Mammary epithelial cell (primary cell): ENCODE measurements at regions of chr6 and their contacts with region 1.

Region 1: DNA sequence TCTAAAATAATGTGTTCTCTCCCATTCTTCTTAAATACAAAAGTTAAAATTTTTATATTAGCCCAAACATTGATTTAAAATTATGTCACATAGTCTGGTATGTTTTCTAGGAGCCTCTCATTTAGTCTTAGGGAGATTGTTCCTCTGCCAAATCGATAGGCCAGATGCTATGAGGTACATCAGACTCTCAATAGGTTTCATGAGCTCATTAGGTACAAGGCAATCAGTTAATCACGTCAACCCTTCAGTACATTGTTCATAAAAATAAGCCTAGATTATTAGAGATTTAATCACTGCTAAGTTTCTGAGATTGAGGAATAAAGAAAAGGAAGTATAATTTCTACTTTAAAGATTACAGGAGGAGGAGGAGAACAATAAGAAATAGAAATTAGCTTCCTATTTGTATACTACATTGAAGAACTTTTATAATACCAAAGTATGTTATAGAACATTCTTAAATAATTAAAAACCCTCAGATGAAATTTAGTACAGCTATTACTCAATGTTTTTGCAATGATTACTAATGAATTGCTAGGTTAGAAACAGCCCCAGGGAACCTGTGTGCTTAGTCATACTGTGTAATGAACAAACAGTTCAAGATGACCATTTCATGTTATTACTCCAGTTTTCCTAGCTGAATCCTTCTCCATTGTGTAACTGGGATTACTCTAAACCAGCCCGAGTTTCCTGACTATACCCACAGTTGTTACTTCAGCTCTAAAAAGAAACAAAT is 117.1 kb downstream of the BMP5 start:
- DNase-seq: peak; percentile 93
- H3K4me3 ChIP-seq: peak overlapping the region in 1 of 3 experiments; percentile 25
- H3K27ac ChIP-seq: peak overlapping the region; percentile 98
- H3K4me1 ChIP-seq: peaks cover 9% of the 10 kb centered on the region
- H3K27me3 ChIP-seq: no peaks in the 10 kb centered on the region
- CTCF ChIP-seq: no peak

Region 2: DNA sequence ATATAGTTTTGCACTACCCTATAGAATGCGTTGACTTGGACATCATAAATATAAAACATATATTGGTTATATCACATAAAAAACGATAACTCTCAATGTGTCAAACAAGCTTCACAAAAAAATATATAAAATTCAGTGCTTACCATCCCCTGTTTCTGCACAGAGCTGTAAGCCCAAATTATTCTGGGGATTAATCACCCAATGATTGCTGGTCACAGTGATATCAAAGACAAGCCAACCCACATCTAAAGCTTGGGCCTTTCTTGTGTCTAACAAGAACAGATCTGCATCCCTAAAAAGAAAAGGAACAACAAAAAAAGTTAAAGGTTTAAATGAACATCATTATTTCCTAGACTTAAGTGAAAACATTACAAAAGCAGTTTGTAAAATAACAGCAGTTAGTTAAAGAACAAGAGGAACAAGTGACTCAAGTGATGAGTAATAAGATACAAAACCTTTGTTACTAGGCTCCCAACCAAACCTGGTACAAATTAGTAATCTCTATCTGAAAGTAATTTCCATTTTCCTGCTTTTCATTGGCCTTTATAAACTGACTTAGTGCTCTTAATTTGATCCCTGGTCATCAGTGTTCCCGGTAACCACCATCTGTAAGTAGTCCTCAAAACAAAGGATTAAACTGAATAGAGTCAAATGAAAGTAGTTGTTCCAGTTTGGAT is 36.0 kb after region 1 on chr6:
- CTCF ChIA-PET with region 1: no interaction called
- dilution Hi-C with region 1: no loop called
- in situ Hi-C with region 1: no loop called
- intact Hi-C with region 1: loop called (anchors 2 kb)
- DNase-seq: peak; percentile 83
- H3K4me3 ChIP-seq: no peak overlapping the region
- H3K27ac ChIP-seq: peak overlapping the region; percentile 95
- H3K4me1 ChIP-seq: peaks cover 5% of the 10 kb centered on the region
- H3K27me3 ChIP-seq: no peaks in the 10 kb centered on the region
- CTCF ChIP-seq: no peak

Region 3: GRCh38 chr6:55825402-55826051 is 67.2 kb after region 1 on chr6:
- CTCF ChIA-PET with region 1: no interaction called
- dilution Hi-C with region 1: no loop called
- in situ Hi-C with region 1: no loop called
- intact Hi-C with region 1: loop called (anchors 2 kb)
- DNase-seq: peak; percentile 83
- H3K4me3 ChIP-seq: no peak overlapping the region
- H3K27ac ChIP-seq: peak overlapping the region; percentile 81
- H3K4me1 ChIP-seq: peaks cover 38% of the 10 kb centered on the region
- H3K27me3 ChIP-seq: no peaks in the 10 kb centered on the region
- CTCF ChIP-seq: no peak

Region 4: GRCh38 chr6:55868771-55869479 is 110.6 kb after region 1 on chr6:
- CTCF ChIA-PET with region 1: no interaction called
- dilution Hi-C with region 1: no loop called
- in situ Hi-C with region 1: no loop called
- intact Hi-C with region 1: loop called (anchors 10 kb)
- DNase-seq: peak; percentile 99
- H3K4me3 ChIP-seq: peak overlapping the region in 1 of 3 experiments; percentile 33
- H3K27ac ChIP-seq: peak overlapping the region; percentile 89
- H3K4me1 ChIP-seq: peaks cover 35% of the 10 kb centered on the region
- H3K27me3 ChIP-seq: no peaks in the 10 kb centered on the region
- CTCF ChIP-seq: no peak

Region 5: GRCh38 chr6:55886185-55886836 is 128.0 kb after region 1 on chr6:
- CTCF ChIA-PET with region 1: no interaction called
- dilution Hi-C with region 1: no loop called
- in situ Hi-C with region 1: no loop called
- intact Hi-C with region 1: loop called (anchors 5 kb)
- DNase-seq: no peak
- H3K4me3 ChIP-seq: no peak overlapping the region
- H3K27ac ChIP-seq: no peak overlapping the region
- H3K4me1 ChIP-seq: peaks cover 8% of the 10 kb centered on the region
- H3K27me3 ChIP-seq: no peaks in the 10 kb centered on the region
- CTCF ChIP-seq: peak; percentile 27 to 42